ENCODE measurements at regions of chr1 and their contacts with region 1.

Region 1: DNA sequence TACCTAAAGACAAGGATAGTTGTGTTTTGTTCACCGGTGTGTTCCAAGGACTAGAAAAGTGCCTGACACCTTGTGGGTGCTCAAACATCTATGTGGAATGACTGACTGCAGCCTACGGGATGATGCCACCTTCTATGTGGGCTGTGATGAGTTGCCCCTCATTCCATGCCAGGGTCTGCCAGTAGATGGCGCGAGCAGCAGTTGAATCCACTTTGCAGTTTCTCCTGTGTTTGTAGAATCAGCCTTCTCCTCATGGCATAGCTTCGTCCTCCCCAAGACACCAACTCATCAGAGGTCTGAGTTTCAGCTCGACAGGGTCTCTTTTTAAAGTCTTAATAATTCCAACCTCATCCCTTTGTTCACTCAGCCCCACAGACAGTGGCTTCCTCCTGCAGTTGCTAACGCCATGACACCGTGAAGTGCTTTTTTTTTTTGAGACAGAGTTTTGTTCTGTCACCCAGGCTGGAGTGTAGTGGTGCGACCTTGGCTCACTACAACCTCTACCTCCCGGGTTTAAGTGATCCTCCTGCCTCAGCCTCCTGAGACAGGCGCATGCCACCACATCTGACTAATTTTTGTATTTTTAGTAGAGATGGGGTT is 133.7 kb downstream of the CAPN8 start:
- H3K4me3 Mint-ChIP-seq: no peak overlapping the region
- H3K27ac Mint-ChIP-seq: no peak overlapping the region
- H3K4me1 Mint-ChIP-seq: peaks cover 6% of the 10 kb centered on the region
- H3K27me3 Mint-ChIP-seq: peaks cover 16% of the 10 kb centered on the region

Region 2: DNA sequence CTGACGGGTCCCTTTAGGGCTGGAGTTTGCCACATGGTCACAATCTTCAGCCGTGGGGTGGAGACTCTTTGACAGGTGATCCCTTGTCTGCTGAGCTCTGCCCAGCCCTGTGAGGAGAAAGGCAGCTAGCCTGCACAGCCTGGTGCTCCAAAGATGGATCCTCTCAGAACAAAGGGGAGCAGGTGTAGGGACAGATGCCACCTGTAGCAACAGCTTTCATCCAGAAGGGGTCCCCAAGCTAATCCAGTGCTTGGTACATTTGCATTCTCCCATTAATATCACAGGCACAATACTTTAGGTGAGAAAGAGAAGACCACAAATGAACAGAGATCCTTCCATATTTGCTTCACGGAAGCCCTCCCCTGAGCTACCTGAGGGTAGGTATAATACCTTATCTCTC is 45.5 kb before region 1 on chr1:
- intact Hi-C with region 1: no loop called
- H3K4me3 Mint-ChIP-seq: no peak overlapping the region
- H3K27ac Mint-ChIP-seq: no peak overlapping the region
- H3K4me1 Mint-ChIP-seq: peaks cover 6% of the 10 kb centered on the region
- H3K27me3 Mint-ChIP-seq: peaks cover 17% of the 10 kb centered on the region

Region 3: GRCh38 chr1:223683586-223684487 is 152.0 kb after region 1 on chr1:
- intact Hi-C with region 1: loop called (anchors 2 kb)
- H3K4me3 Mint-ChIP-seq: no peak overlapping the region
- H3K27ac Mint-ChIP-seq: no peak overlapping the region
- H3K4me1 Mint-ChIP-seq: peaks cover 7% of the 10 kb centered on the region
- H3K27me3 Mint-ChIP-seq: peaks cover 20% of the 10 kb centered on the region

Measured in dendritic cell treated with granulocyte-macrophage colony-stimulating factor and Interleukin-4, amounts not matched to agents 40 ng/mL and 50 ng/mL, for 4 days (primary cell).